HepG2 (cell line): ENCODE measurements at regions of chr6 and their contacts with region 1.

Region 1: DNA sequence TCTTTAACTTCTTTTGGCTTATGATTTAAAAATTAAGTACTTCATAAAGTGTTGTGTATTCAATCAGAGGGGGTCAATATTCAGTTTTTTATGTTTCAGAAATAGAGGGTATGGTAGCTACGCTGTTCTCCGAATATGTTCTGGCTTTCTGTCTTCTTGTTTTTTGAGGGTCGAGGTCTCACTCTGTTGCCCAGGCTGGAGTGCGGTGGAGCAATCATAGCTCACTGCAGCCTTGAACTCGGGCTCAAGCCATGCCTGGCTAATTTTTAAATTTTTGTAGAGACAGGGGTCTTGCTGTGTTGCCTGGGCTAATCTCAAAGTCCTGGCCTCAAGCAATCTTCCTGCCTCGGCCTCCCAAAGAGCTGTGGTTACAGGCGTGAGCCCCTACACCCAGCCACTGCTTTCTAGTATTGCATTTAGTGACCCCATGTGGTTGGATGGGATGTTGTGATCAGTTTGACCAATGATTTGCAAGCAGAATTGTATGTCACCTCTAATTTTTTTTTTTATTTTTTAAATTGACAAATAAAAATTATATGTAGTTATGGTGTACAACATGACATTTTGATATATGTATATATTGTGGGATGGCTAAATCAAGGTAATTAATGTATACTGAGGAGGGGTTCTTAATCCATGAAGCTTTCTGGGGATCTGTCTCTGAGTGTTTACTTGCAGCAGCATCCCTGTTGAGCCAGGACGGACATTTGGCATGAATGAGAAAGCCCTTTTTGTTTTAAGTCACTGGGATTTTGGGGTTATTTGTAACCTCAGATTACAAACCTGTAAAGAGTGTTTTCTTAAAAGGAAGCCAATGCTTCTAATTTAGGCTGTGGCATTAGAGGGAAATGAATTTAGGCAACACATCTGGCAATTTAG is 38.5 kb upstream of the DEK start:
- DNase-seq: peak; percentile 48
- ATAC-seq: peak; percentile 91
- H3K4me3 ChIP-seq: no peak overlapping the region
- H3K27ac ChIP-seq: no peak overlapping the region
- H3K4me1 ChIP-seq: peaks cover 5% of the 10 kb centered on the region; the same call in 1 of the 2 replicates
- H3K27me3 ChIP-seq: no peaks in the 10 kb centered on the region
- CTCF ChIP-seq: peak; percentile 66
- EP300 ChIP-seq: no peak
- POLR2A ChIP-seq: no peak
- RAD21 ChIP-seq: no peak

Region 2: GRCh38 chr6:18264219-18264922 is 38.4 kb before region 1 on chr6 and contains the start of gene DEK:
- CTCF ChIA-PET with region 1: no interaction called
- POLR2A ChIA-PET with region 1: no interaction called
- in situ Hi-C with region 1: no loop called
- intact Hi-C with region 1: loop called (anchors 2 kb)
- DNase-seq: peak; percentile 84
- ATAC-seq: peak; percentile 88
- H3K4me3 ChIP-seq: peak within 1 kb of the TSS; percentile 80 to 95 (median 90)
- H3K27ac ChIP-seq: peak within 1 kb of the TSS; percentile 92
- H3K4me1 ChIP-seq: peaks cover 84% of the 10 kb centered on the region
- H3K27me3 ChIP-seq: no peaks in the 10 kb centered on the region; a peak in 1 of 5 replicates
- CTCF ChIP-seq: peak; percentile 75
- EP300 ChIP-seq: no peak
- POLR2A ChIP-seq: peak; percentile 45 to 72
- RAD21 ChIP-seq: peak; percentile 27; the same call in 1 of the 2 replicates
- total RNA-seq, gene DEK: 276 and 337 TPM in 2 replicates